RWPE1 (cell line): ENCODE measurements at regions of chr12 and their contacts with region 1.

Region 1: GRCh38 chr12:48696626-48697025 is 14.6 kb upstream of the KANSL2 start:
- DNase-seq: no peak
- H3K27ac ChIP-seq: no peak overlapping the region
- CTCF ChIP-seq: no peak

Region 2: DNA sequence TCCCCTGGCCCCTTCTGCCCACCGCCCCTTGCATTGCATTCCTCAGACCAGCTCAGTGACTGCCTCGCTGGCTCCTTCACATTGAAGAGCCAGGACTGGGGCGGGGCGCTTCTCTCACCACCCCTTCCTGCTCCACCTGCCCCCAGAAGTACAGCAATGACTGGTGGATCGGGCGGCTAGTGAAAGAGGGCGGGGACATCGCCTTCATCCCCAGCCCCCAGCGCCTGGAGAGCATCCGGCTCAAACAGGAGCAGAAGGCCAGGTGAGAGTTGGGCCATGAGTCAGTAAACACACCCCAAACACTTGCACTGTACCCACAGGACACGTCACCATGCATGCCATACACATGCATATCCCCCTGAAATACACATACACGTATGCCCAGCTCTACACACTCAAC is 127.5 kb after region 1 on chr12:
- CTCF ChIA-PET with region 1: interaction called, 10 read pairs
- POLR2A ChIA-PET with region 1: no interaction called
- DNase-seq: peak; percentile 83
- H3K27ac ChIP-seq: no peak overlapping the region
- CTCF ChIP-seq: no peak